Posterior vena cava (tissue), 2 donors: ENCODE measurements at regions of chr4 and their contacts with region 1.

Region 1: DNA sequence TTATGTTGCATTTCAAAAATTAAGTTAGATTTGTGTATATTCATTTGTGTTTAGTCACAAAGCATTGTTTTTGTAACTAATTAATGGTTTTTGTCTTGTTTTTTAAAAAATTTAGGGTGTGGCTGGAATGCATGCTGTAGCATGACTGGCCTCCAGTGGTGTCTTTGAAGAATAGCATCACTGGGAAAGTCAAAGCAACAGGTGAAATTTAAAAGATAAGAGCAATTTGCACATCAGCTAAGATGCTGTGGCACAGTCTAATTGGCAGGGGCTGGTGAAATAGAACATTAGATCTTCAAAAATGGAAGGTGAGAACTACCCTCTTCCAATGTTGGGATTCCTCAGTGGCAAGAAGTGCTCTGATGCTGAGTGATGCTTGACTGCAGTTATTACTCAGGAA is 45.3 kb downstream of the ANK2 start:
- DNase-seq: no peak

Region 2: DNA sequence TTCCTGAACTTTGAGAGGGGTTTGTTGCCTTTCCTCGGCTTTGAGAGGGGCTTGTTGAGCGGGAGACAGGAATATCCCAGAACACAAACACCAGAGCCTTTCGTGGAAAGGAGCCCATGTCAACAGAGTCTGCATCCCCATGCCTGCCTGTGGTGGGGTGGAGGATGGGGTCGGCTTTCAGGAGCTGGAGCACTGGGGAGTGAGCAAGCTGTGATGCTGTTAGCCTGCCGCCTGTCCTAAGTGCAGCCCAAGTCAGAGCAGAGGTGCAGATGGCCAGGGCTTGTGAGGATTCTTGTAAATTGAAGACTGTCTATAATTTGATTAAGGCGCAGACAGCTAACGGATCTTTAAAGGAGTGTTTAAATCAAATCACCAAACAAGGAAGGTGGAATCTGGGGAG is 148.7 kb before region 1 on chr4:
- intact Hi-C with region 1: loop called in 1 of 2 experiments (anchors 5 kb)
- DNase-seq: no peak

Region 3: DNA sequence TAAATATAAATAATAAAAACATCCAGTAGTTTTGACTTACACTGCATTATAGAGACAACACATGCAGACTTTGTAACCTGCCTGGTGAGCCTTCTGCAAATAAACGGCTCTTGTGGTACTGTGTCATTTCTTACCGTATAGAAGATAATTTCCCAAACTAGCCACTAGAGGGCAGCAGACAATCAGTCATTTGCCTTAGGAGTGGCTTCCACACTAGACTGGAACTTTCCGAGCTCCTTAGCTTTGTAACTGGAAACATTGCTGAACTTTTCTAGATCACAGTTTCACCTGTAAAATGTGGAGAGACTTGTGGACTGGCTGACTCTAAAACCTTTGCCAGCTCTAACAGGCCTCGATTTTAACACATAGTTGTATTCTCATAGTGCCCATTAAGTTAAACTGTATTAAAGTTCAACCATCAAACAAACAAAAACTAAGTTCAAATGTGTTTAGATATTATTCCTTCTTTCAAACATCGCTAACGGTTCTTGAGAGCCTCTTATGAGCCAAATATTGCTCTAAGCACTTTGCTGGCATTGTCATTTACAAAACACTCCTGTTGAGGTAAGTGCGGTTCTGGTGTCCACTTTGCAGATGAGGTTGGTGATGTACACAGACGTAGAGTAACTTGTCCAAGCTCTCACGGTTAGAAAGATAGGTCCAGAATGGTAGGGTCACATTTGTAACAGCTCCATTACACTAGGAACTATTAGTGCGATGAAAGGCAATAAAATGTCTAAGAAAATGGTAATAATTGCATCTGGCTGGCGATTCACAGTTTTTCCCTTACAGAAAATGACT is 300.1 kb after region 1 on chr4:
- intact Hi-C with region 1: no loop called
- DNase-seq: no peak